B cell (primary cell): ENCODE measurements at regions of chr1 and their contacts with region 1.

Region 1: GRCh38 chr1:156338180-156338973 is at the starts of genes CCT3 and TSACC:
- DNase-seq: peak; percentile 100
- ATAC-seq: peak; percentile 94
- H3K4me3 ChIP-seq: peak within 1 kb of the TSS; percentile 82 to 98 (median 87)
- H3K4me3 Mint-ChIP-seq: peak within 1 kb of the TSS; percentile 97
- H3K27ac ChIP-seq: peak within 1 kb of the TSS; percentile 70 to 74
- H3K27ac Mint-ChIP-seq: peak within 1 kb of the TSS; percentile 96
- H3K4me1 ChIP-seq: peaks cover 13 to 19% of the 10 kb centered on the region in 2 donors
- H3K4me1 Mint-ChIP-seq: peaks cover 35% of the 10 kb centered on the region
- H3K27me3 ChIP-seq: no peaks in the 10 kb centered on the region
- H3K27me3 Mint-ChIP-seq: no peaks in the 10 kb centered on the region
- CTCF ChIP-seq: no peak
- total RNA-seq, gene CCT3: 106 and 109 TPM in 2 replicates
- total RNA-seq, gene TSACC: 0.69 TPM in 1 of 2 replicates, not detected in the other

Region 2: DNA sequence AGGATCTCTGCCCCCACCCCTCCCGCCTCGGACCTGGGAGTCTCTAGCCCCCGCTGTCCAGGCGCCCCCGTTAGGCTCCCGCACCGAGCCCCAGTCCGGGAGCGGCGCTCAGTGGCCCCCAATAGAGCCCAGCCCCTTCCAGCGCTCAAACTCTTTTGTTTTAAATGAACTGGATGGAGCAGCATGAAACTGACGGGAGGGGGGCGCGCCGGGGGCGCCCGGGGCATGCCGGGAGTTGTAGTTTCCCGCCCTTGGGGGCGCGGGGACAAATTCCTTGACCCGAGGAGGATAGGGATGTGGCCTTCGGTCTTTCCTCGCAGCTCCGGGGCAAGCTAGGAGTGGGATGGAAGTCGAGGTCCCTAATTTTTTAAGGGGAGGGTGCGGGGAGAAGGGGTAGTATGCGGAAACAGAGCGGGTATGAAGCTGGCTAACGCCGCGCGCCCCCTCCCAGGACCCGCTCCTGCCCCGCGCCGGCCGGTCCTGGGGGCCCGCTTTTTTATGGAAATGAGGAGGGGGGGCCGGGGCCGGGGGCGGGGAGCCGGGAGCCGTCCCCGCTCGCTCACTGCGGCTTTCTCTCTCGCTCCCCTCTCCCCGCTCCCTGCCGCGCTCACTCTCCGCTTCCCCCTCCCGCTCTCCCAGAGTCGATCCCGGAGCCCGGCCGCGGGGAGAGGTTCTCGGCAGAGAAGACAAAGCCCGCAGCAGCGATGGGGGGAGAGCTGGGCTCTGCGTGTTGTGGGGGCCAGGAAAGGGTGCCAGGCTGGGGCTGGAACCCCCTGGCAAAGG is 255.9 kb before region 1 on chr1 and contains the start of gene MEX3A:
- CTCF ChIA-PET with region 1: no interaction called
- POLR2A ChIA-PET with region 1: no interaction called
- intact Hi-C with region 1: loop called (anchors 1 kb)
- DNase-seq: peak; percentile 74
- ATAC-seq: peak; percentile 85
- H3K4me3 ChIP-seq: peak within 1 kb of the TSS; percentile 44 to 87 (median 81)
- H3K4me3 Mint-ChIP-seq: peak within 1 kb of the TSS; percentile 91
- H3K27ac ChIP-seq: peak within 1 kb of the TSS in 1 of 2 donors; percentile 26
- H3K27ac Mint-ChIP-seq: peak within 1 kb of the TSS; percentile 63
- H3K4me1 ChIP-seq: peaks cover 11 to 18% of the 10 kb centered on the region in 2 donors
- H3K4me1 Mint-ChIP-seq: peaks cover 22% of the 10 kb centered on the region
- H3K27me3 ChIP-seq: peaks cover 0 to 49% (median 21%) of the 10 kb centered on the region in 4 experiments
- H3K27me3 Mint-ChIP-seq: peaks cover 12% of the 10 kb centered on the region
- CTCF ChIP-seq: no peak
- total RNA-seq, gene MEX3A: 0.73 and 1.1 TPM in 2 replicates

Region 3: DNA sequence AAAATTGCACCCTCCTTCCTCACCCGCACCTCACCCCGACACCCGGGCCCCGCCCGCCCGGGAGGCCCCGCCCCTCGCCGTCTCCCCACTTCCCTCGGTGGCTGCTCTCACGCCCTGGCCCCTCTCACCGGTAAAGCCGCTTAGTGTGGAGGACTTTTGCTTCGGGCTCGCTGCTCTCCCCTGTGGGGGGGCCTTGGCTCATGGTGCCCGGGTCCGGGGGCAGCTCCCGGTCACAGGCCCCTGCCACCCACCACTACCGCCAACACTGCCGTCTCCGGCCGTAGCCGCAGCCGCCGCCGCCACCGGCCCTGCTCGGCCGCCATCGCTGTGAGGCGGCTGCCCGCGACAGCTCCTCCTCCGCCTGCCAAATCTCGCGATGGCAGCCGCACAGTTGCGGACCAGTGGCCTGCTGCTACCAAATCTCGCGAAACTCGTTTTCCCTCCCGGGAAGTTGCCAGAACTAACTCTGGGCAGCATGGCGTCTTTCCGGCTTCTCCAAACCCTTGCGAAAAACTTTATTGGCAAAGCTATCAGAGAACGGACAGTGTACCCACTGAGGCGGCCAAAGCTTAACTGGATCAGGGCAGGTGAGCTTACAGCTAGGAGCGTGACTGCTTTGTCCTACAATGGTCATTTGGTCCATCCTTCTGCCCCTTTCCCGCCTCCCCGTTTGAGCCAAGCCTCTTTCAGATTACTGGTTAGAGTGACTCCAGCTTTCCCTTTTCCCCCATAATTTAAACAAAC is 55.7 kb before region 1 on chr1 and contains the start of gene SMG5:
- CTCF ChIA-PET with region 1: interaction called, 3 read pairs
- POLR2A ChIA-PET with region 1: no interaction called
- intact Hi-C with region 1: loop called (anchors 1 kb)
- DNase-seq: peak; percentile 98
- ATAC-seq: peak; percentile 93
- H3K4me3 ChIP-seq: peak within 1 kb of the TSS; percentile 74 to 99 (median 86)
- H3K4me3 Mint-ChIP-seq: peak within 1 kb of the TSS; percentile 98
- H3K27ac ChIP-seq: peak within 1 kb of the TSS; percentile 79 to 89
- H3K27ac Mint-ChIP-seq: peak within 1 kb of the TSS; percentile 98
- H3K4me1 ChIP-seq: peaks cover 20 to 28% of the 10 kb centered on the region in 2 donors
- H3K4me1 Mint-ChIP-seq: peaks cover 39% of the 10 kb centered on the region
- H3K27me3 ChIP-seq: no peaks in the 10 kb centered on the region
- H3K27me3 Mint-ChIP-seq: no peaks in the 10 kb centered on the region
- CTCF ChIP-seq: no peak
- total RNA-seq, gene SMG5: 74.0 and 77.0 TPM in 2 replicates

Region 4: DNA sequence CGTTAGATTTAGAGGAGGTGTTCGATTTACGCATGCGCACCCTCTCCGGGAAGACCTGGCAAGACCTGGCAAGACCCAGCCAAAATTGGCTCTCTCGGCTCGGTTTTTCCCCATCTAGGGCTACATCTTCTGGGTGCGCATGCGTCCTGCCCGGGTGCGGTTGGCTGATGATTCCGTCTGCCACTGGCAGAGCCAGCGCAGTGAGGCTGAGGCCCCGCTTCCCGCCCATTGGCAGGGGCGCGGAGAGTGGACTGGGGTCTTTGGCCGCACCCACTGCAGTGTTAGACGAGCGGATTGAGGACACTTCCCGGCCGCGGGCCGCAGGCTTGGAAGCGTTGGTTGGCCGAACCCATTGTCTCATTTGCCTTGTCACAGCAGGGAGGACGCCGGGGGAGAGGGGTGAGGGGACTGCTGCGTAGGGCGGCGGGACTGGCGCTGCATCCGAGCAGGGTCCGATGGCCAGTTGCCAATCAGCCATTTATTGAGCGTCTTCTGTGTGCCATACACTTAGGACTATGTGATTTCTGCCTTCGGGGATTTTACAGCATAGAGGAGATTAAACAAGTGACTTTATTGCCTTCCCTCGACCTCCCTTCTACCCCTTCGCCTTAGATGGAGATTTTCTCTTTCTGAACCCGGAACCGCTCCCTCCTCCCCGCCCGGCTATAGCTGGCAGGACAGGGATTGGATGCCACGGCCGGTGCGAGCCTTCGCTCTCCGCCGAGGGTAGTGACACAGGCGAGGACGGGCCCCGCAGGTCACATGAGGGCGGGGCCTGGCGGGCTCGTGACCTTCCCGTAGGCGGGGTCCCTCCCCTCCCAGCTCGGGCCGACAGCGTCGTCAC is 118.5 kb after region 1 on chr1:
- CTCF ChIA-PET with region 1: no interaction called
- POLR2A ChIA-PET with region 1: no interaction called
- intact Hi-C with region 1: loop called (anchors 2 kb)
- DNase-seq: peak; percentile 98
- ATAC-seq: peak; percentile 85
- H3K4me3 ChIP-seq: peak overlapping the region; percentile 41 to 87 (median 84)
- H3K4me3 Mint-ChIP-seq: peak overlapping the region; percentile 96
- H3K27ac ChIP-seq: peak overlapping the region; percentile 97 to 100
- H3K27ac Mint-ChIP-seq: peak overlapping the region; percentile 98
- H3K4me1 ChIP-seq: peaks cover 3 to 15% of the 10 kb centered on the region in 2 donors
- H3K4me1 Mint-ChIP-seq: peaks cover 17% of the 10 kb centered on the region
- H3K27me3 ChIP-seq: no peaks in the 10 kb centered on the region
- H3K27me3 Mint-ChIP-seq: no peaks in the 10 kb centered on the region
- CTCF ChIP-seq: no peak

Region 5: GRCh38 chr1:156751758-156752757 is 413.7 kb after region 1 on chr1:
- CTCF ChIA-PET with region 1: no interaction called
- POLR2A ChIA-PET with region 1: no interaction called
- intact Hi-C with region 1: loop called (anchors 5 kb)
- DNase-seq: peak; percentile 95
- ATAC-seq: peak; percentile 88
- H3K4me3 ChIP-seq: peak overlapping the region; percentile 72 to 95 (median 86)
- H3K4me3 Mint-ChIP-seq: peak overlapping the region; percentile 93
- H3K27ac ChIP-seq: peak overlapping the region; percentile 58 to 82
- H3K27ac Mint-ChIP-seq: peak overlapping the region; percentile 94
- H3K4me1 ChIP-seq: peaks cover 46 to 62% of the 10 kb centered on the region in 2 donors
- H3K4me1 Mint-ChIP-seq: peaks cover 63% of the 10 kb centered on the region
- H3K27me3 ChIP-seq: no peaks in the 10 kb centered on the region
- H3K27me3 Mint-ChIP-seq: no peaks in the 10 kb centered on the region
- CTCF ChIP-seq: no peak